CD14-positive monocyte (primary cell): ENCODE measurements at regions of chr6 and their contacts with region 1.

Region 1: DNA sequence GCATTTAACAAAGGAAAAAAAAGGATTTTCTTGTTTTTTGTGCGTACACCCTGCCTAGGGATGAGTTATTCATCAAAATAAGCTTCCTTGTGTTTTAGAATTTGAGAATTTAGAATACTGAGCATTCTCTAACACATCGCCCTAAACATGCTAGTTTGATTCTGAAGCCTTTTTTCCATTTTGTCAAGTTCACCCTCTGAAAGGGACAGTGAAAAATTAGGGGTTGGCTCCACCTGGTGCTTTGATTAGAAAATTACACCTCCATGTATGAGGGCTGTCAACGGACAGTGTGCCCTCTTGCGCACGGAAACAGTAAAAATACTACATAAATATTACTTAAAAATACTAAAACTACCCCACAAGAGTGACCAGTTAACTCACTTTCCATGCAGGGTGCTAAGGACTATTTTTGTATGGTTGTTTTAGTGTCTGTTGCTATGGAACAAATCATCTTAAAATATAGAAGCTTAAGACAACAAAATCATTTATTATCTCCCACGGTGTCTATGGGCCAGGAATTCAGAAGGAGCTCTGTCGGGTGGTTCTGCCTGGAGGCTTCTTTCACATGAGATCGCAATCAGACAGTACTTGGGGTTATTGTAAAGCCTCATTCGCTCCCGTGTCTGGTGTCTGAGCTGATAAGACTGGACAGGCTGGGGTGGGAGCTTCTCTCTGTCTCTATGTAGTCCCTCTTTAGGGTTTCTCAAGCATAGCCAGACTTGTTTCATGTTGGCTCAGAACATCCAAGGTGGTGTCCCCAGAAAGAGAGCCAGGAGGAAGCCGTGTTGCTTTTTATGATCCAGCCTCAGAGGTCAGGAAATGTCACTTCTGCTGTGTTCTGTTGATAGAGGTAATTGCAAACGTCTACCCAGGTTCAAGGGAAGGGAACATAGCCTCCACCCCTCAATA is 41.1 kb upstream of the TMEM170B start:
- DNase-seq: peak; percentile 72 to 82 (median 80)
- H3K4me3 ChIP-seq: peak overlapping the region; percentile 19 to 65 (median 47)
- H3K4me3 Mint-ChIP-seq: peak overlapping the region; percentile 68 to 83
- H3K27ac ChIP-seq: peak overlapping the region; percentile 89 to 95
- H3K27ac Mint-ChIP-seq: peak overlapping the region; percentile 95 to 100 (median 99)
- H3K4me1 ChIP-seq: peaks cover 35 to 42% of the 10 kb centered on the region in 2 donors
- H3K4me1 Mint-ChIP-seq: peaks cover 29% of the 10 kb centered on the region
- H3K27me3 ChIP-seq: no peaks in the 10 kb centered on the region
- H3K27me3 Mint-ChIP-seq: peaks cover 0 to 3% (median 0%) of the 10 kb centered on the region in 3 donors
- CTCF ChIP-seq: peak; percentile 93

Region 2: GRCh38 chr6:11144393-11144851 is 352.0 kb before region 1 on chr6:
- intact Hi-C with region 1: loop called (anchors 10 kb)
- DNase-seq: peak; percentile 69 to 82 (median 76)
- H3K4me3 ChIP-seq: no peak overlapping the region
- H3K4me3 Mint-ChIP-seq: peak overlapping the region in 1 of 2 donors; percentile 33
- H3K27ac ChIP-seq: peak overlapping the region in 1 of 2 donors; percentile 81
- H3K27ac Mint-ChIP-seq: peak overlapping the region; percentile 69 to 98 (median 95)
- H3K4me1 ChIP-seq: peaks cover 30 to 33% of the 10 kb centered on the region in 2 donors
- H3K4me1 Mint-ChIP-seq: peaks cover 35% of the 10 kb centered on the region
- H3K27me3 ChIP-seq: no peaks in the 10 kb centered on the region
- H3K27me3 Mint-ChIP-seq: peaks cover 0 to 2% (median 0%) of the 10 kb centered on the region in 3 donors
- CTCF ChIP-seq: peak; percentile 96

Region 3: DNA sequence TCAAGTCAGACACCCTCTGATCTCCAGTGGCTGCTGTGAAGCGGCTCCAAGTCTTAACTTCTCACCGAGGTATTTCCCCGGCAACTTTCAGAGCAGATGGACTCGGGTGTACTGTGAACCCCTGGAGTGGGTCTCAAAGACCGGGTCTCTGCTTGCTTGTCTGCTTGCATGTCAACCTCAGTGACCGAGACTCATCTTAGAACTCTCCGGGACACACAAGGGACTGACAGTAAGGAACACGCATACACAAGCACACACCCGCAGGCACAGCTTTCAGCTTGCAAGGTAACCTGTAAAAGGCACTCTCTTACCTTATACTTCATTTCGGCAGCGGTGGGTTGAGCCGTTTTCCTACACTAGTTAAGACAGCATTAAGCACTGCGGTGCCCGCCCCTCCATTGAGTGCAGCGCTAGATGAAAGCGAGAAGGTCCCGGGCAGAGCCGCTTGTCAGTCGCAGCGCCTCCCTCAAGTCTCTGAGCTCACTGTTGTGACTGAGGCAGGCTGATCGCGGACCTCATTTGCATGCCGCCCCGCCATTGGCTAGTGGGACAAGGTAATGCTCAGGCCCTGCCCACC is 264.1 kb before region 1 on chr6 and contains the start of gene NEDD9:
- intact Hi-C with region 1: loop called in 1 of 2 experiments (anchors 5 kb)
- DNase-seq: peak; percentile 89 to 96 (median 92)
- H3K4me3 ChIP-seq: peak within 1 kb of the TSS; percentile 52 to 98 (median 88)
- H3K4me3 Mint-ChIP-seq: peak within 1 kb of the TSS; percentile 94 to 99
- H3K27ac ChIP-seq: peak within 1 kb of the TSS; percentile 45 to 80
- H3K27ac Mint-ChIP-seq: peak within 1 kb of the TSS; percentile 96 to 100 (median 97)
- H3K4me1 ChIP-seq: peaks cover 27 to 40% of the 10 kb centered on the region in 2 donors
- H3K4me1 Mint-ChIP-seq: peaks cover 50% of the 10 kb centered on the region
- H3K27me3 ChIP-seq: peaks cover 0 to 3% of the 10 kb centered on the region in 2 donors
- H3K27me3 Mint-ChIP-seq: peaks cover 0 to 6% (median 4%) of the 10 kb centered on the region in 3 donors
- CTCF ChIP-seq: no peak
- polyA plus RNA-seq, gene NEDD9: 18.2 to 35.9 (median 33.0) TPM

Region 4: DNA sequence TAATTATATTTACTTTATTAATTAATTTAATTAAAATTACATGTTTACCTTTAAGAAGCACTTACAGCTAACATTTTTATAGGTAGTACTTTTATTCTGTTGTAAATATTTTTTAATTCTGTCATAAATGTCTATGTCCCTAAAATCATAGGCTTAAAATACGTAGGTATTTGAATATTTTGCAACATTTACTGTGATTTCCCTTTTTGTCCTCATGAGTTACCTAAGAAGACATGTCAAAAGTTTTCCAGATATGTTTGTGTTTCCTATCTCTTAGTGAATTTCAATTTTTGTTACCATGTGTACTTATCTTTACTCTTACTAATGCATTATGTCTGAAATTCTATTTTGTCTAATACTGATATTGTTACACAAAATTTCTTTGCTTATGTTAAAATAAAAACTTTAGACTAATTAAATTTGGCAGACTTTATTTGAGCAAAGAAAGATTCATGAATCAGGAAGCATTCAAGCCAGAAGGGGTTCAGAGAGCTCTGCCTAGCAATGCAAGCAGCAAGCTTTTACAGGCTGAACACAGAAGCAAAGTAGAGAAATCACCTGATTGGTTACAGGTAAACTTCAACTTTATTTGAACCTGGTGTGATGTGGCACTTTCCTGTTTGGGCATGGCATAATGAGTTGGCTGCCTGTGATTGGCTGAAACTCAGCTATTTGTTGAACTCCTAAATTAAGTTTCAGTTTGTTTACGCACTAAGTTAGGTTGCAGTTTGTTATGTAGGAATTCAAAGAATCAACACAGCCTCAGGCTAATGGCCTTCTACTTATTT is 82.0 kb before region 1 on chr6:
- intact Hi-C with region 1: loop called in 1 of 2 experiments (anchors 10 kb)
- DNase-seq: peak; percentile 23 to 71 (median 68)
- H3K4me3 ChIP-seq: no peak overlapping the region
- H3K4me3 Mint-ChIP-seq: no peak overlapping the region
- H3K27ac ChIP-seq: peak overlapping the region in 1 of 2 donors; percentile 55
- H3K27ac Mint-ChIP-seq: peak overlapping the region; percentile 66 to 86 (median 81)
- H3K4me1 ChIP-seq: peaks cover 14 to 21% of the 10 kb centered on the region in 2 donors
- H3K4me1 Mint-ChIP-seq: peaks cover 29% of the 10 kb centered on the region
- H3K27me3 ChIP-seq: no peaks in the 10 kb centered on the region
- H3K27me3 Mint-ChIP-seq: peaks cover 0 to 3% (median 2%) of the 10 kb centered on the region in 3 donors
- CTCF ChIP-seq: no peak